Prostate gland (tissue), 2 donors: ENCODE measurements at regions of chr5 and their contacts with region 1.

Region 1: DNA sequence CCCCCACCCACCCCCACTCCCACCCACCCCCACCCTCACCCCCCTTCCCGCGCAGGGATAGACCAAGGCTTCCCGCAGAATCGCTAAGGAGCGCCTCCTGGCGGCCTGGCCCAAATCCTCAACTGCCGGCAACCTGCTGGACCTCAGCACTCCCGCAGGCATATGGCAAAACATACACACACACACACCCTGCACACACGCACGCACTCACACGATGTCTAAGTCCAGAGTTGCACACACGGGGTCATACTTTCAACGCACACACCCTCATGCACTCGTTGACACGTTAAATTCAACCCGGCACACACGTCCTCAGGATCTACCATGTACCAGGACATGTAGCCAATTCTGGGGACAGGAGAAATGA is 1.7 kb downstream of the CPLX2 start:
- DNase-seq: no peak
- H3K4me3 ChIP-seq: no peak overlapping the region
- H3K27ac ChIP-seq: no peak overlapping the region
- H3K4me1 ChIP-seq: peaks cover 4% of the 10 kb centered on the region
- H3K27me3 ChIP-seq: peaks cover 11% of the 10 kb centered on the region
- CTCF ChIP-seq: no peak
- POLR2A ChIP-seq: no peak

Region 2: GRCh38 chr5:175796536-175797499 is 76.3 kb before region 1 on chr5:
- intact Hi-C with region 1: loop called (anchors 5 kb)
- DNase-seq: peak; percentile 76
- H3K4me3 ChIP-seq: peak overlapping the region in 1 of 2 donors; percentile 11
- H3K27ac ChIP-seq: no peak overlapping the region
- H3K4me1 ChIP-seq: peaks cover 4% of the 10 kb centered on the region
- H3K27me3 ChIP-seq: no peaks in the 10 kb centered on the region
- CTCF ChIP-seq: no peak
- POLR2A ChIP-seq: no peak